Naive thymus-derived CD4-positive, alpha-beta T cell (primary cell): ENCODE measurements at regions of chr18 and their contacts with region 1.

Region 1: DNA sequence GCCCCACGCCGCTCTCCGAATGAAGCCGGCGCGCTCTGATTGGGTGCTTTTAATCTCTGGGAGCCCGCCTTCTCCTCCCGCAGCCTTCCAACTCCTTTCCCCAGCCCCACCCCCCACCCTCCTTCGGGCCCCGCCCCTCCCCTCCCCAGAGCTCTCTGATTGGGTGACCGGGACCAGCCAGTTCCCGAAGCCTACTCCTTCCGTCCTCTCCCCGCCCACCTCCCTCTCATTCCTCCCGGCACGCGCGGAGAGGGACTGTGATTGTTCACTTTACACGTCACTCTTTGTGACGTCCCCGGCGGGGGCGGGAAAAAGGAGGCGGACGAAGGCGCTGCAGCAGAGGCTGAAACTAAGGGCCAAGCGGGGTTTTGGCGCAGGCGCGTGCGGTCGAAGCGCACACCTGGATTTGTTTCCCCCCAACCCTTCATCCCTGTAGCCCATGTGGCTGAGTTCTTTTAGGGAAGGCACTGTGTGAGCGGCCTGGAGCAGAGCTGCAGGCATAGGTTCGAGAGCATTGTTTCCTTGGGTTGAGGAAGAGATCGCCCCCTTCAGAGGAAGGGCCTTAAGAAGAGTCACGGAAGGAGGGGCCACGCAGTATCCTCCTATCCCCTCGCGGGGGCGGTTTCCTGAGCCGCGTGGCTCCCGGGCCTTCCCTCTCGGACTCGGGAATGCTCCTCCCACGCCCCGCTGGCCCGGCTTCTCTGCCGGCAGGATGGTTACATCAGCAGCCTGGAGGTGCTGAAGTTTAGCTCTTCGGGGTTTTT is at the start of gene MEX3C:
- DNase-seq: peak; percentile 97 to 99 (median 99)
- ATAC-seq: peak; percentile 90
- H3K4me3 ChIP-seq: peak within 1 kb of the TSS; percentile 71
- H3K4me3 Mint-ChIP-seq: peak within 1 kb of the TSS; percentile 83 to 99 (median 97)
- H3K27ac ChIP-seq: peak within 1 kb of the TSS; percentile 80
- H3K27ac Mint-ChIP-seq: peak within 1 kb of the TSS; percentile 92 to 99 (median 97)
- H3K4me1 ChIP-seq: peaks cover 17% of the 10 kb centered on the region in 2 donors
- H3K4me1 Mint-ChIP-seq: peaks cover 20 to 35% (median 31%) of the 10 kb centered on the region in 7 donors
- H3K27me3 ChIP-seq: no peaks in the 10 kb centered on the region
- H3K27me3 Mint-ChIP-seq: no peaks in the 10 kb centered on the region
- total RNA-seq, gene MEX3C: 47.1 to 68.8 (median 53.7) TPM

Region 2: DNA sequence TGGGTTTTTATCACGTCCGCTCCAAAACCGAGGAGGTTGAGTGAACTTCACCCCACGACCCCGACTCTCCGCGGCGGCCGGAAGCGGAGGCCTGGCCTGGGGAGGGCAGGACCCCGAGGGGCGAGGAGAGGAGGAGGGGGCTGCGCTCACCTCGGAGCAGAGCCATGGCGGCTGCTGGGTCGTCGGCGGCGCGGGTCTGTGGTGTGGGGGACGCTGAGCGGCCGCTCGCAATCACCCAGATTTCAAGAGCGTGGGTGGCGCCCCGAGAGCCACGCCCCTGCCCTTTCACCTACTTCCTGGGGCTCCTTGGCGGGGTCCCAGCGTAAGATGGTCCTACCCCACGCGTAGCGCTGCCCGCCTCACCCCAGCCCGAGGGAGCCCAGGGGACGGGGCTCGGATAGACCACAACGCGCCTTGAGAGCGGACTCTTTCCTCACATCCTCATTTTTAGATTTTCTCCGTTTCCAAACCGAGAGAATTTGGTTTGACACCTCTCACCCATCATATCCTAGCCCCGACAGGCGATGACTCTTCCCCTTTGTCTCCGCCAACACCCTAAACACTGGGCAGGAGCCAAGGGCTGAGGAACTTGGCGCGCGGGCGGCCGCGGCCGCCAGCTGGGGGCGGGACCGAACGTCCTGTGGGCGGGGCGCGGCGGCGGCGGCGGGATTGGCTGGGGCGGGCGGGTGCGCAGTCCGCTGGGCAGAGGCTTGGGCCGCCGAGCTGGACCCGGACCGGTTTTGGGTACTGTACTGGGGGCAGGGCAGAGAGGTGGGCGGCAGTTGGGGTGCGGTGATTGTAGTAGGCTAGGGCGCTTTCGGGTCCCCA is 1384.3 kb before region 1 on chr18 and contains the start of gene ACAA2:
- CTCF ChIA-PET with region 1: no interaction called
- POLR2A ChIA-PET with region 1: no interaction called
- intact Hi-C with region 1: loop called (anchors 2 to 5 kb)
- DNase-seq: peak; percentile 48 to 87 (median 60)
- ATAC-seq: peak; percentile 93
- H3K4me3 ChIP-seq: peak within 1 kb of the TSS; percentile 87
- H3K4me3 Mint-ChIP-seq: peak within 1 kb of the TSS; percentile 89 to 99 (median 96)
- H3K27ac ChIP-seq: peak within 1 kb of the TSS; percentile 90
- H3K27ac Mint-ChIP-seq: peak within 1 kb of the TSS; percentile 91 to 99 (median 97)
- H3K4me1 ChIP-seq: peaks cover 20 to 39% of the 10 kb centered on the region in 2 donors
- H3K4me1 Mint-ChIP-seq: peaks cover 42 to 70% (median 63%) of the 10 kb centered on the region in 7 donors
- H3K27me3 ChIP-seq: no peaks in the 10 kb centered on the region
- H3K27me3 Mint-ChIP-seq: no peaks in the 10 kb centered on the region
- total RNA-seq, gene ACAA2: 15.4 to 94.7 (median 24.4) TPM

Region 3: DNA sequence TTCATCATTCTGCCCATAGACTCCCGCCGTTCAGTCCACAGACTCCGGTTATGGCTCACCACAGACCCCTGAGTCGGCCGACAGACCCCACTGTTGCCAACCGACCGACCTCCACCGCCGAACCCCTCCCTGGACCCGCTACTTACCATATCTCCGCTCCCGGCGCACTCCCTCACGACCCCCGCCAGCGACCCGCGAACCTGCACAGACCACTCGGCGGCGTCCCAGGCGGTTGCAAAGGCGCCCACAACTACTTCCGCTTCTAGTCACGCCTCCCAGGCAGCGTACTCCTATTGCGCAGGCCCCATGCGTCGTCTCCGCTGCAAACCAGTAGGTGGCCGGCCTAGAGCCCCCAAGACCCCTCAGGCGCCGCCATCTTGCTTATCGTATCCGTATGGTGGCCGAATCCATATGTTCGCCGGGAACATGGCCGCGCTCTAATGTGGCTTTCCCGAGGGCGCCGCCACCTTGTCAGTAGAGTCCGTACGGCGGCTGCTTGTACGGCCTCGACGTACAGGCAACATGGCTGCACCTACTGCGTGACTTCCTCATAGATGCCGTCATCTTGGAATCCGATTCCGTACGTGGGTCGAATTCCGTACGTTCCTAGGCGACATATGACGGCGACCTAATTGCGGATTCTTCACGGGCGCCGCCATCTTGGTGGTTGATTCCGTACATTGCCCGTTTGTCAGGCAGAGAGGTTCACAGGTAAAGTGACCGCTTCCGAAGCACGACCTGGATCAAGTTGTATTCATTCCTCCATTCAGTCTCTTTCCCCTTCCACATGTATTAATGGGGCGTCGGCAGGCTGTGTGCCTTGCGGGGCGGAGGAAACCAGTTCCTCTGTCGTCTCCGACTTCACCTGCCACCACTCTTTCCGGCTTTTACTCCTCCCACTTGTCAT is 910.1 kb before region 1 on chr18 and contains the start of gene CXXC1:
- CTCF ChIA-PET with region 1: no interaction called
- POLR2A ChIA-PET with region 1: no interaction called
- intact Hi-C with region 1: loop called (anchors 1 kb)
- DNase-seq: peak; percentile 89 to 98 (median 97)
- ATAC-seq: peak; percentile 92
- H3K4me3 ChIP-seq: peak within 1 kb of the TSS; percentile 98
- H3K4me3 Mint-ChIP-seq: peak within 1 kb of the TSS; percentile 91 to 100 (median 98)
- H3K27ac ChIP-seq: peak within 1 kb of the TSS; percentile 97
- H3K27ac Mint-ChIP-seq: peak within 1 kb of the TSS; percentile 94 to 100 (median 99)
- H3K4me1 ChIP-seq: peaks cover 0 to 7% of the 10 kb centered on the region in 2 donors
- H3K4me1 Mint-ChIP-seq: peaks cover 6 to 39% (median 28%) of the 10 kb centered on the region in 7 donors
- H3K27me3 ChIP-seq: no peaks in the 10 kb centered on the region
- H3K27me3 Mint-ChIP-seq: peaks cover 0 to 2% (median 0%) of the 10 kb centered on the region in 5 donors
- total RNA-seq, gene CXXC1: 141 to 197 (median 155) TPM

Region 4: DNA sequence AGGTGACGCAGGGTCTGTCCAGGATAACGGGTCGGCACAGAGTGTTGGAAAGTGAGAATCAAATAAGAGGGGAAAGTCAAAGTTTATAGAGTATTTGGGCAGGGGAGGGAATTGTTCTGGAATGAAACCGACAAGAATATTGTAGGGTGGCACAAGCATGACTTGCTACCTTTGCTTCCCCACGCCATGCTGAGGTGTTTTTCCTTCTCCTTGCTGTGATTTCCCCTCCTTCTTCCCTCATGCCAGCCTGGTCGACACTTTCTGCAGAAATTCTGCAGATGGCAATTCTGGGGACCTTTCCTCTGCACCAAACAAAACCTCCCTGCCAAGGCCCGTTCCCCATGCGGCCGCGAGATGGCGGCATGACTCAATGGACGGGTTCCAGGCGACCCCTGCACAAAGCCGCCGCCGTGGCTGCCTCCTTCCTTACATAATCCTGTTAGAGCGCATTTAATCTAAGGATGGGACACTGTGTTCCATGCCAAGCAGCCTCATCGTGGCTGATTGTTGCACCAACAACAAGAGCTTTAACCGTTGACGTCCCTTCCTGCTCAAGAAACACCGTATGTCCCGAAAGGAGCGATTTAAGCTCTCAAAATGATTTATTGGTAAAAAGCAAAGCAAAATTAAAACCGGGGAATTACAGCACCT is 378.0 kb before region 1 on chr18 and contains the start of gene MRO:
- CTCF ChIA-PET with region 1: no interaction called
- POLR2A ChIA-PET with region 1: no interaction called
- intact Hi-C with region 1: loop called (anchors 5 kb)
- DNase-seq: peak; percentile 63 to 82 (median 76)
- ATAC-seq: peak; percentile 98
- H3K4me3 ChIP-seq: peak within 1 kb of the TSS; percentile 49
- H3K4me3 Mint-ChIP-seq: no peak within 1 kb of the TSS
- H3K27ac ChIP-seq: no peak within 1 kb of the TSS
- H3K27ac Mint-ChIP-seq: peak within 1 kb of the TSS in 1 of 9 donors; percentile 12
- H3K4me1 ChIP-seq: peaks cover 0 to 5% of the 10 kb centered on the region in 2 donors
- H3K4me1 Mint-ChIP-seq: peaks cover 0 to 3% (median 0%) of the 10 kb centered on the region in 7 donors
- H3K27me3 ChIP-seq: no peaks in the 10 kb centered on the region
- H3K27me3 Mint-ChIP-seq: peaks cover 7 to 21% (median 14%) of the 10 kb centered on the region in 5 donors
- total RNA-seq, gene MRO: not detected

Region 5: DNA sequence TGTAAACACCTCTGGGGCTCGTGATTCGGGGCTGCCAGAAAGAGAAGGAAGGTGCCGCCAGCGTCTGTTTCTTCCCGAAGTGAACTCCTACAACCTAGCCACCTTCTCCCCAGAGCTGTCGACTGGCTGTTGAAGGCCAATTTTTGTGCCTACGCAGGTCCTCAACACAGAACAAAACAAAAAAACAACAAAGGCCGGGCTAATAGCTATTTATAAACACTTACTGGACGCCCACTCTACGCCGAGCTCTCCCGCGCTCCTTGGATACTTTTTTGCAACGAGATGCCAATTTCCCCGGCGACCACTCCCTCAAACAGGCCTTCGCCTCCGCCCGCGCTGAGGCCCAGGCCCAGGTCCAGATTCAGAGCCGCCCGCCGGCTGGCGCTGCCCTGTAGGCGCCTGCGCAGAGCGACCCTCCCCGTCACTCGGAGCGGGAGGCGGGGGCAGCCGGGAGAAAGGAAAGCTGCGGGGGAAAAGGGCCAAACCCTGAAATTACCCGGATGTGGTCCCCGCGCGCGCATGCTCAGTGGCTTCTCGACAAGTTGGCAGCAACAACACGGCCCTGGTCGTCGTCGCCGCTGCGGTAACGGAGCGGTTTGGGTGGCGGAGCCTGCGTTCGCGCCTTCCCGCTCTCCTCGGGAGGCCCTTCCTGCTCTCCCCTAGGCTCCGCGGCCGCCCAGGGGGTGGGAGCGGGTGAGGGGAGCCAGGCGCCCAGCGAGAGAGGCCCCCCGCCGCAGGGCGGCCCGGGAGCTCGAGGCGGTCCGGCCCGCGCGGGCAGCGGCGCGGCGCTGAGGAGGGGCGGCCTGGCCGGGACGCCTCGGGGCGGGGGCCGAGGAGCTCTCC is 167.9 kb before region 1 on chr18 and contains the start of gene SMAD4:
- CTCF ChIA-PET with region 1: no interaction called
- POLR2A ChIA-PET with region 1: interaction called, 22 read pairs
- intact Hi-C with region 1: loop called (anchors 1 kb)
- DNase-seq: peak; percentile 95 to 99 (median 97)
- ATAC-seq: peak; percentile 89
- H3K4me3 ChIP-seq: peak within 1 kb of the TSS; percentile 63
- H3K4me3 Mint-ChIP-seq: peak within 1 kb of the TSS; percentile 96 to 100 (median 99)
- H3K27ac ChIP-seq: peak within 1 kb of the TSS; percentile 81
- H3K27ac Mint-ChIP-seq: peak within 1 kb of the TSS; percentile 95 to 100 (median 98)
- H3K4me1 ChIP-seq: peaks cover 13 to 40% of the 10 kb centered on the region in 2 donors
- H3K4me1 Mint-ChIP-seq: peaks cover 35 to 62% (median 57%) of the 10 kb centered on the region in 7 donors
- H3K27me3 ChIP-seq: no peaks in the 10 kb centered on the region
- H3K27me3 Mint-ChIP-seq: no peaks in the 10 kb centered on the region
- total RNA-seq, gene SMAD4: 82.5 to 170 (median 92.5) TPM

Region 6: GRCh38 chr18:51153659-51154371 is 44.0 kb before region 1 on chr18:
- CTCF ChIA-PET with region 1: interaction called, 20 read pairs
- POLR2A ChIA-PET with region 1: interaction called, 97 read pairs
- intact Hi-C with region 1: loop called (anchors 1 kb)
- DNase-seq: peak; percentile 35 to 65 (median 55)
- ATAC-seq: peak; percentile 76
- H3K4me3 ChIP-seq: peak overlapping the region; percentile 52
- H3K4me3 Mint-ChIP-seq: peak overlapping the region; percentile 80 to 96 (median 87)
- H3K27ac ChIP-seq: peak overlapping the region; percentile 61
- H3K27ac Mint-ChIP-seq: peak overlapping the region; percentile 91 to 98 (median 94)
- H3K4me1 ChIP-seq: peaks cover 22 to 23% of the 10 kb centered on the region in 2 donors
- H3K4me1 Mint-ChIP-seq: peaks cover 19 to 44% (median 37%) of the 10 kb centered on the region in 7 donors
- H3K27me3 ChIP-seq: no peaks in the 10 kb centered on the region
- H3K27me3 Mint-ChIP-seq: no peaks in the 10 kb centered on the region

Region 7: GRCh38 chr18:51211552-51211951 is 13.7 kb after region 1 on chr18:
- CTCF ChIA-PET with region 1: interaction called, 5 read pairs
- POLR2A ChIA-PET with region 1: no interaction called
- intact Hi-C with region 1: loop called in 1 of 2 experiments (anchors 1 kb)
- DNase-seq: peak in 2 of 9 donors; percentile 14 to 46
- ATAC-seq: peak; percentile 95
- H3K4me3 ChIP-seq: no peak overlapping the region
- H3K4me3 Mint-ChIP-seq: peak overlapping the region in 1 of 10 donors; percentile 42
- H3K27ac ChIP-seq: no peak overlapping the region
- H3K27ac Mint-ChIP-seq: peak overlapping the region in 6 of 9 donors; percentile 5 to 50 (median 12)
- H3K4me1 ChIP-seq: peaks cover 0 to 7% of the 10 kb centered on the region in 2 donors
- H3K4me1 Mint-ChIP-seq: peaks cover 10 to 19% (median 12%) of the 10 kb centered on the region in 7 donors
- H3K27me3 ChIP-seq: no peaks in the 10 kb centered on the region
- H3K27me3 Mint-ChIP-seq: no peaks in the 10 kb centered on the region